MCF 10A (cell line): ENCODE measurements at regions of chr3 and their contacts with region 1.

Region 1: GRCh38 chr3:159763602-159764489 is 224.8 kb upstream of the IL12A start:
- DNase-seq: peak; percentile 81
- H3K4me3 Mint-ChIP-seq: peak overlapping the region; percentile 81
- H3K27ac Mint-ChIP-seq: peak overlapping the region; percentile 90
- H3K4me1 Mint-ChIP-seq: peaks cover 40% of the 10 kb centered on the region
- H3K27me3 Mint-ChIP-seq: no peaks in the 10 kb centered on the region
- CTCF ChIP-seq: no peak

Region 2: DNA sequence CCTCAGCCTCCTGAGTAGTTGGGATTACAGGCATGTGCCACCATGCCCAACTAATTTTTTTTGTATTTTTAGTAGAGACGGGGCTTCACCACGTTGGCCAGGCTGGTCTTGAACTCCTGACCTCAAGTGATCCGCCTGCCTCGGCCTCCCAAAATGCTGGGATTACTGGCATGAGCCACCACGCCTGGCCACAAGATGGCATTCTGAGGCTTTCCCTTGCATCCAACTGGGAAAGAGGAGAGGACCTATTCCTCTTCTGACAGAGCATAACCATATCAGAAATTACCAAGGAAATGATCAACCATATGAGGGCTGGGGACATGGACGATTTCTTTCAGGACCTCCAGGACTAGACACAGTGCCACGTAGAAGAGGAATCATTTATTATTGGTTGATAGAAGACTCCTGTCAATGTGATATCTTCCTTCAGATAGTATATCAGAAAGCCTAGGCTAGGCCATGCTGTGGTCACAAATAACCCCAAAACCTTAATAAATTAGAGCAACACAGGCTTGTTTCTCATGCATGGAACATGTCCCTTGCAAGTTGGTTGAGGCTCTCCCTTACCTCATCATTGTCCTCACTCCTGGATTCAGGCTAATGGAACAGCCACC is 147.5 kb before region 1 on chr3:
- CTCF ChIA-PET with region 1: interaction called, 3 read pairs
- POLR2A ChIA-PET with region 1: interaction called, 4 read pairs
- intact Hi-C with region 1: loop called (anchors 1 kb)
- DNase-seq: peak; percentile 67
- H3K4me3 Mint-ChIP-seq: no peak overlapping the region
- H3K27ac Mint-ChIP-seq: no peak overlapping the region
- H3K4me1 Mint-ChIP-seq: peaks cover 14% of the 10 kb centered on the region
- H3K27me3 Mint-ChIP-seq: no peaks in the 10 kb centered on the region
- CTCF ChIP-seq: peak; percentile 83

Region 3: GRCh38 chr3:159732172-159733111 is 31.4 kb before region 1 on chr3:
- CTCF ChIA-PET with region 1: interaction called, 10 read pairs
- POLR2A ChIA-PET with region 1: interaction called, 12 read pairs
- intact Hi-C with region 1: loop called (anchors 2 kb)
- DNase-seq: peak; percentile 73
- H3K4me3 Mint-ChIP-seq: peak overlapping the region; percentile 81
- H3K27ac Mint-ChIP-seq: peak overlapping the region; percentile 50
- H3K4me1 Mint-ChIP-seq: peaks cover 19% of the 10 kb centered on the region
- H3K27me3 Mint-ChIP-seq: no peaks in the 10 kb centered on the region
- CTCF ChIP-seq: no peak

Region 4: GRCh38 chr3:159775372-159775961 is 11.6 kb after region 1 on chr3:
- CTCF ChIA-PET with region 1: interaction called, 18 read pairs
- POLR2A ChIA-PET with region 1: interaction called, 212 read pairs
- intact Hi-C with region 1: no loop called
- DNase-seq: peak; percentile 80
- H3K4me3 Mint-ChIP-seq: no peak overlapping the region
- H3K27ac Mint-ChIP-seq: peak overlapping the region; percentile 84
- H3K4me1 Mint-ChIP-seq: peaks cover 33% of the 10 kb centered on the region
- H3K27me3 Mint-ChIP-seq: no peaks in the 10 kb centered on the region
- CTCF ChIP-seq: no peak

Region 5: DNA sequence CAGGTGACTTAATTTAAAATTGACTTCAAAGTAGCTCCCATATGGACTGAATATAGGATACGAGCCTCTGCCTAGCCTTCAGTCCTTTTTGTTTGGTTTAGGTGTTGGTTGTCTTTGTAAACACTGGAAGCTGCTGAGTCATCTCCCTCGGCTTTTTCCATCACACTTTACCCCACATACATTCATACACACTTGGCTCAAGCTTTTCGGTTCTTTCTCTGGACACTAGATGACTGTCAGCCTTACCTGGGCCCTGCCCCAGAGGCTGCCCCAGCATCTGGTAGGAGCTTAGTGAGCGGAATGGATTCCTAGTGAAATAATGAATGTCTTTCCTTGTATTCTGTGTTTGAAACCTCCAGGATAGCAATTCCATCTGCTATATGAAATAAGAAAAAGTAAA is 23.3 kb after region 1 on chr3:
- CTCF ChIA-PET with region 1: interaction called, 18 read pairs
- POLR2A ChIA-PET with region 1: interaction called, 212 read pairs
- intact Hi-C with region 1: loop called (anchors 1 kb)
- DNase-seq: peak; percentile 94
- H3K4me3 Mint-ChIP-seq: peak overlapping the region; percentile 47
- H3K27ac Mint-ChIP-seq: peak overlapping the region; percentile 89
- H3K4me1 Mint-ChIP-seq: peaks cover 55% of the 10 kb centered on the region
- H3K27me3 Mint-ChIP-seq: no peaks in the 10 kb centered on the region
- CTCF ChIP-seq: no peak

Region 6: GRCh38 chr3:160287666-160288065 is 523.8 kb after region 1 on chr3:
- CTCF ChIA-PET with region 1: no interaction called
- POLR2A ChIA-PET with region 1: no interaction called
- intact Hi-C with region 1: no loop called
- DNase-seq: peak; percentile 4
- H3K4me3 Mint-ChIP-seq: no peak overlapping the region
- H3K27ac Mint-ChIP-seq: no peak overlapping the region
- H3K4me1 Mint-ChIP-seq: no peaks in the 10 kb centered on the region
- H3K27me3 Mint-ChIP-seq: no peaks in the 10 kb centered on the region
- CTCF ChIP-seq: no peak